Activated CD8-positive, alpha-beta memory T cell treated with anti-CD3 and anti-CD28 coated beads, Interleukin-2, amount 10 ng/mL, durations not matched to agents 7 days and 5 days (primary cell): ENCODE measurements at regions of chr16 and their contacts with region 1.

Region 1: DNA sequence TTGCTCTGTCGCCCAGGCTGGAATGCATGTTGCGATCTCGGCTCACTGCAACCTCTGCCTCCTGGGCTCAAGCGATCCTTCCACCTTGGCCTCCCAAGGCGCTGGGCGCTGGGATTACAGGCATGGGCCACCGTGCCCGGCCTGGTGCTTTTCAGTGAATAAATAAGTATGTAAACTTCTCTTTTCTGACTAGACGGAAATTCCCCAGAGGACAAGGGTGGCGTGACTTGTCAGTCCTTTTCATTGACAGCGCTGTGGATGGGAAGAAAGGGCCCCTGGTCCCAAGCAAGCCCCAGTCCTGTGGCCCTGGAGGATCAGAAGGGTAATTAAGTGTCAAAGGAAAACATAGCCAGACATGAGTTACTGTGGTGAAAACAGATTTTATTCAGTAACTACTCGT is 9.6 kb upstream of the SPN start:
- DNase-seq: no peak
- ATAC-seq: no peak
- H3K4me3 Mint-ChIP-seq: no peak overlapping the region
- H3K27ac Mint-ChIP-seq: no peak overlapping the region
- H3K4me1 Mint-ChIP-seq: peaks cover 16% of the 10 kb centered on the region
- H3K27me3 Mint-ChIP-seq: no peaks in the 10 kb centered on the region

Region 2: DNA sequence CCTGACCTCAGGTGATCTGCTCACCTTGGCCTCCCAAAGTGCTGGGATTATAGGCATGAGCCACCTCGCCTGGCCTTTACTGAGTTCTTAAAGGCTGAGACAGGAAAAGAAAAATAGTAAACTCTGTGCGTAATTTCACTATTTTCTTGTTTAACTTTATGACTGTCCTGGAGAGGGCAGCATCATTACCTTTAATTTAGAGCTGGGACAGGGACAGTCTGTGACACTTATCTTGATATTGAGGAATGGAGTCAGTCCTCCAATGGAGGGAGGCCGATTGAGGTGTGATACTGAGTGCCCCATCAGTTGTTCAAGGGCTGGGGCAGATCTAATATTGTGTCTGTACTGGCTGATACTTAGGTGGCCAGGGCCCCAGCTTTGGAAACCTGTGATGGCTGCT is 11.9 kb before region 1 on chr16:
- CTCF ChIA-PET with region 1: interaction called, 18 read pairs
- DNase-seq: no peak
- ATAC-seq: peak; percentile 57
- H3K4me3 Mint-ChIP-seq: peak overlapping the region; percentile 49
- H3K27ac Mint-ChIP-seq: peak overlapping the region; percentile 84
- H3K4me1 Mint-ChIP-seq: peaks cover 51% of the 10 kb centered on the region
- H3K27me3 Mint-ChIP-seq: no peaks in the 10 kb centered on the region

Region 3: GRCh38 chr16:29664091-29664921 is 10.8 kb after region 1 on chr16:
- CTCF ChIA-PET with region 1: interaction called, 14 read pairs
- DNase-seq: peak; percentile 65
- ATAC-seq: peak; percentile 15
- H3K4me3 Mint-ChIP-seq: peak overlapping the region; percentile 100
- H3K27ac Mint-ChIP-seq: peak overlapping the region; percentile 94
- H3K4me1 Mint-ChIP-seq: peaks cover 46% of the 10 kb centered on the region
- H3K27me3 Mint-ChIP-seq: no peaks in the 10 kb centered on the region

Region 4: DNA sequence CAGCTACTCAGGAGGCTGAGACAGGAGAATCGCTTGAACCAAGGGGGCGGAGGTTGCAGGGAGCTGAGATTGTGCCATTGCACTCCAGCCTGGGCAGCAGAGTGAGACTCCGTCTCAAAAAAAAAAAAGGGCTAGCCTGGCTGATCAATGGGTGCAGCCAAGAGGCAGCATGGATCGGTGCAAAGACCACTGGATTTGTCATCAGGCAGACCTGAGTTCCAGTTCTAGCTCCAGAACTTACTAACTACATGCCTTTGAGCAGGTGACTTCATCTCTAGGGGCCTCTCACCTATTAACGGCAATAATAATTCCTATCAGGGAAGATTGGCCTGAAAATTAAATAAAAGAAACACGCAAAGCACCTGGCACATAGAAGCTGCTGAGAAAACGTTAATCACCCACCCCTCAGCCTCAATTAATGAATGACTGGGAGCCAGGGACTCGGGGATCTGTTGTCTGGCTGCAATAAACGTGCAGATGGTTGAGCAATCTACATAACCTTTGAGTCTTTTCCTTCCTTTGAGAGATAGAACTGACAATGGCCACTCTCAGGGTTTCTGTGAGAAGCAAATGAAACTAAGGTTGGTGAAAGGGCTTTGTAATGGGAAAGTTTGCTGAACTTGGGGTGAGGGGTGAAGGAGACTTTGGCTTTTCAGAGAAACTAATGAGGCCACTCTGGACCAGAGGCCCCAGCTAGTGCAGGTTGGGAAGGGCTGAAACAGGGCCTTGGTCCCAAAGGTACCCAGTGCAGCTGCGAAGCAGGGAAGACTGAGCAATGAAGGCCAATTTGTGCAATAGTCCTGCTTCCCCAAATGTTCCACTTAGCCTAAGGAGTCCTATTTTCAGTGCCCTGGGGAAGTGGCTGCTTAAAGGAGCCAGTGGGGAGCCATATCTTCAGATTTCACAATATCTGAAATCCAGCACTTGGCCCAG is 238.3 kb after region 1 on chr16:
- CTCF ChIA-PET with region 1: no interaction called
- DNase-seq: no peak
- ATAC-seq: no peak
- H3K4me3 Mint-ChIP-seq: no peak overlapping the region
- H3K27ac Mint-ChIP-seq: no peak overlapping the region
- H3K4me1 Mint-ChIP-seq: no peaks in the 10 kb centered on the region
- H3K27me3 Mint-ChIP-seq: no peaks in the 10 kb centered on the region